ENCODE measurements at regions of chr4 and their contacts with region 1.

Region 1: GRCh38 chr4:143351774-143352451 is 15.2 kb downstream of the GAB1 start:
- DNase-seq: no peak
- ATAC-seq: peak in 1 of 2 donors; percentile 27
- H3K4me3 ChIP-seq: no peak overlapping the region
- H3K27ac ChIP-seq: peak overlapping the region; percentile 90
- H3K4me1 ChIP-seq: peaks cover 10% of the 10 kb centered on the region
- H3K27me3 ChIP-seq: no peaks in the 10 kb centered on the region

Region 2: DNA sequence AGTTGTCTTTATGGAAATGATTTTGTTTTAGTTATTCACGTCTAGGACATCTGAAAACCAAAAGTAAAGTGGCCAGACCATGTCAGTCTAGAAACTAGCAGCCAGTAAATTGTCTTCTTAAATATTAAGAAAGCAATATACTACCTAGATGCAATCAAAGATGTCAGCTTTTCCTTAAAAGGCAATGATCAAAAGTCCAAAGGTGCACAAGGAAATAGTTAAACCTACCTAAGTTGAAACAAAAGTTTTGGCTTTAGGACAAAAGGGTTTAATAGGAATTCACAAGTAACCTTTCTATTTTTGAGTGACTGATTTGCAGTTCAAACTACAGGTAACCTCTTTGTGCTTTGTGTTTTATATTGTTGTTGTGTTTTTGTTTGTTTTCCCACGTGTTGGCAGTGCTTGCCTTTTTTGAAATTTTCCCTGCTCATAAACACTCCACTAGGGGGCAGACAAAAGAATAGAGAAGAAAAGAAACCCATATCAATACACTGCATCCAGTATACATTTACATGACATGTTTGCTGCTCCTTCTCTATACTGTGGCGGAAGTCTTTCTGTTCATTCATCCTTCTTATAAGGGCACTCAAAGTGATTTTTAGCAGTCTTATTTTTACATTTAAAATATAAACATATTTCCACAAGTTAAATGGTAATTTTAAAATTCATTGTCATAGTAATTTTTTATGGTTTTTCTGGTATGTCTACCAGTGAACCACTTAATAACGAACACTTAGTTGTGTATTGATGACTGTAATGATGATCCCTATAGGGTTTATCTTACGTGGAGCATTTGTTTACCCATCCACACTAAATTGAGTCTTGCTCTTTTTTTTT is 47.4 kb after region 1 on chr4:
- intact Hi-C with region 1: loop called in 1 of 4 experiments (anchors 5 kb)
- DNase-seq: no peak
- ATAC-seq: no peak
- H3K4me3 ChIP-seq: no peak overlapping the region
- H3K27ac ChIP-seq: no peak overlapping the region
- H3K4me1 ChIP-seq: peaks cover 10% of the 10 kb centered on the region
- H3K27me3 ChIP-seq: no peaks in the 10 kb centered on the region

Region 3: DNA sequence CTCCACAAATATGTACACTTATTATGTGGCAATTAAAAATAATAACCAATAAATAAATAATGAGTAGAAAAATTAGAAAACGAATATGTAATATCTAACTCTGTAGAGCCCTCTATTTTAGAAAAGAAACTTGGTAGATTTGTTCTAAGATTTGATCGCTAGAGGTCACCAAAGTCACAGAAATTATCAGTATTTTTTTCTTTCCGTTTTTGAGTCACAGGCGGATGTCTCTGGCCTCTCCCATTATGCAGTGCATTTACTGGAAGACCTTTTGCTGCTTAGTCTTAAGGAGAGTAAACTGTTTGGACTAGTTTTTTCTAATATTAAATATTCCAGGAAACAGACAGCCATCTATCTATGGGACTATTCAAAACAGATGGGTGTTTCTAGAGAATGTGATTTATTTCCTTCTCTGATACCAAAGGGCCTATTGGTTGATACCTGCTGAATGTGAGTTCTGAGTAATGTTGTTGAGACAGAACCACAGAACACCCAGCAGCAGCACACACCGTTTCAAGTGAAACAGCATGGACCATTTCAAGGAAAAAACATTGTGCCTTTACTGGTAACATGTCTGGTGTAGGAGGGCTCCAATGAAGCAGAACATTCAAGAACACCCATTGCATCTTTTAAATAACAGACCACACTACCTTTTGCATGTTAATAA is 822.6 kb after region 1 on chr4:
- intact Hi-C with region 1: no loop called
- DNase-seq: no peak
- ATAC-seq: peak; percentile 43 to 81
- H3K4me3 ChIP-seq: no peak overlapping the region
- H3K27ac ChIP-seq: no peak overlapping the region
- H3K4me1 ChIP-seq: no peaks in the 10 kb centered on the region
- H3K27me3 ChIP-seq: no peaks in the 10 kb centered on the region

Measured in right cardiac atrium (tissue), 5 donors.